Transverse colon (tissue), 4 donors: ENCODE measurements at regions of chr1 and their contacts with region 1.

Region 1: GRCh38 chr1:115379943-115380342 is 41.9 kb upstream of the NGF start:
- DNase-seq: no peak
- H3K4me3 ChIP-seq: no peak overlapping the region
- H3K27ac ChIP-seq: no peak overlapping the region
- H3K4me1 ChIP-seq: no peaks in the 10 kb centered on the region
- H3K27me3 ChIP-seq: peaks cover 4% of the 10 kb centered on the region
- CTCF ChIP-seq: no peak
- EP300 ChIP-seq: no peak
- POLR2A ChIP-seq: no peak

Region 2: DNA sequence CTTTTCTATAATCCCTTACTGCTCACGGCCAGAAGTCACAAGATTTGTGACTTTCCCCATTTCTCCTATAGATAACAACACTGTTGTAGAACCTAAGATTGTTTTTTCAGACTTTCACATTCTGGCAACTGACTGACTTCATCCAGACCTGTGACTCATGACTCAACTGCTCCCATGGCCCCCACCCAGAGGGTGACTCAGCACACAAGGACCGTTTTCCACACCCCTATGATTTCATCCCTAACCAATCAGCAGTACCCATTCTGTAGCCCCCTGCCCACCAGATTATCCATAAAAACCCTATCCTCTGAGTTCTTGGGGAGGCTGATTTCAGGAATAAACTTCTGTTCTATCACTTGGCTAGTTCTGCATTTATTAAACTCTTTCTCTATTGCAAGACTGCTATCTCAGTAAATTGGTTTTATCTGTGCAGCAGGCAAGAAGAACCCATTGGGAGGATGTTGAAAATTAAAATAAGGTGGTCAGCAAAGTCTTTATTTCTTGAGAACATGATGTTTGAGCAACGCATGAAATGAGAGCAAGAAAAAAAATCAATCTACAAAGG is 121.6 kb before region 1 on chr1:
- in situ Hi-C with region 1: no loop called
- intact Hi-C with region 1: no loop called
- DNase-seq: no peak
- H3K4me3 ChIP-seq: no peak overlapping the region
- H3K27ac ChIP-seq: no peak overlapping the region
- H3K4me1 ChIP-seq: no peaks in the 10 kb centered on the region
- H3K27me3 ChIP-seq: no peaks in the 10 kb centered on the region
- CTCF ChIP-seq: no peak
- EP300 ChIP-seq: no peak
- POLR2A ChIP-seq: no peak

Region 3: GRCh38 chr1:115411371-115412063 is 31.6 kb after region 1 on chr1:
- in situ Hi-C with region 1: no loop called
- intact Hi-C with region 1: loop called (anchors 2 kb)
- DNase-seq: no peak
- H3K4me3 ChIP-seq: no peak overlapping the region
- H3K27ac ChIP-seq: no peak overlapping the region
- H3K4me1 ChIP-seq: no peaks in the 10 kb centered on the region
- H3K27me3 ChIP-seq: no peaks in the 10 kb centered on the region
- CTCF ChIP-seq: no peak
- EP300 ChIP-seq: no peak
- POLR2A ChIP-seq: no peak

Region 4: GRCh38 chr1:115642168-115643072 is 262.5 kb after region 1 on chr1:
- in situ Hi-C with region 1: no loop called
- intact Hi-C with region 1: no loop called
- DNase-seq: peak; percentile 69
- H3K4me3 ChIP-seq: peak overlapping the region; percentile 66 to 98 (median 82)
- H3K27ac ChIP-seq: peak overlapping the region; percentile 87 to 96 (median 90)
- H3K4me1 ChIP-seq: peaks cover 0 to 39% (median 14%) of the 10 kb centered on the region in 4 donors
- H3K27me3 ChIP-seq: no peaks in the 10 kb centered on the region
- CTCF ChIP-seq: peak in 3 of 5 experiments; percentile 5 to 22 (median 10)
- EP300 ChIP-seq: no peak
- POLR2A ChIP-seq: no peak